Adrenal gland (tissue), 19 donors: ENCODE measurements at regions of chr15 and their contacts with region 1.

Region 1: DNA sequence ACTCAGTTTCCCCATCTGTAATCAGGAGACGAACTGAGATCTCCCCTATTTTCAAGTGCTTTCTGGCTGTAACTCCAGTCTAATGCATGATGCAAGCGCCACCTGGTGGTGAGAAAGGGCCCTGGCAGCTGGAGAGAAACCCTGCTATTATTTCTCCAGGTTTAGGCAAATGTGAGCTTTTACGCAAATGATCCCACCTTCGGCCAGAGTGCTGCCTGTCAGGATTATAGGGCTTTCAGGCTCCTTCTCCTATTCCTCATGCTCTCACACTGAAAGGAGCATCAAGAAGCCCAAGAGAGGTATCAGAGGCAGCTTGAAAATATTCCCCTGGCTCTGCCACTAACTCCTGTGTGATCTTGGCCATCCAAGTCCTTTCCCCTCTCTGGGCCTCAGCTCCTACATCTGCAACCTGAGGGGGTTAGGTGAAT is 93.9 kb upstream of the RASGRF1 start:
- DNase-seq: peak; percentile 63 to 92 (median 78)
- H3K4me3 ChIP-seq: no peak overlapping the region
- H3K27ac ChIP-seq: no peak overlapping the region
- H3K4me1 ChIP-seq: no peaks in the 10 kb centered on the region
- H3K27me3 ChIP-seq: no peaks in the 10 kb centered on the region
- CTCF ChIP-seq: peak; percentile 89 to 100 (median 93)
- POLR2A ChIP-seq: no peak

Region 2: GRCh38 chr15:78778422-78778821 is 406.1 kb before region 1 on chr15:
- intact Hi-C with region 1: no loop called
- DNase-seq: no peak
- H3K4me3 ChIP-seq: no peak overlapping the region
- H3K27ac ChIP-seq: no peak overlapping the region
- H3K4me1 ChIP-seq: no peaks in the 10 kb centered on the region
- H3K27me3 ChIP-seq: no peaks in the 10 kb centered on the region
- CTCF ChIP-seq: no peak
- POLR2A ChIP-seq: no peak

Region 3: DNA sequence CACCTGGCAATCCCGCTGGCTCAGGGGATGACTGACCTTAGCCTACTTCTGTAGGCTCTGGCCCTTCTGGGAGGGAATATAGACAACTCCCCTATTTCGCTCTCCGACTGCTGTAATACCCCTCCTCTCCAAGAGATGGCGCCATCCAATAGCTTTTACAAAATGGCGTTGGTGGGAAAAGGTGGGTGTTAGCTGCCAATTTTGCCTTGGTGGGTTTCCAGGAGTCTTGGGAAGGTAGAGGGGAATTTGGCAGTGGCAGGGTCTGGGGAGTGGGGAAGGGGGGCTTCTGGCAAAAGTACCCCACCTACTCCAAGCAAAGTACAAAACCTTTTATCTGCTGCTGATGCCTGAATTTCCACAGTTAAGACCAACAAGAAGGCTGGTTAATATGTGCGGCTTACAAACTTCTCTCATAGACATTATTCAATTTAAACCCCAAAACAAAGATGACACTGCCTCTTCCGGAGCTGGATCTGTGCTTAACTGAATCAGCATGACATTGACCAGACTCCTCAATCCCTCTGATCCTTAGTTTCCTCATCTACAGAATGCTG is 156.0 kb before region 1 on chr15:
- intact Hi-C with region 1: loop called (anchors 2 to 5 kb)
- DNase-seq: peak in 6 of 7 donors; percentile 32 to 73 (median 53)
- H3K4me3 ChIP-seq: no peak overlapping the region
- H3K27ac ChIP-seq: no peak overlapping the region
- H3K4me1 ChIP-seq: no peaks in the 10 kb centered on the region
- H3K27me3 ChIP-seq: no peaks in the 10 kb centered on the region
- CTCF ChIP-seq: peak; percentile 73 to 91 (median 85)
- POLR2A ChIP-seq: no peak